Activated CD4-positive, alpha-beta memory T cell treated with anti-CD3 and anti-CD28 coated beads for 36 hours (primary cell): ENCODE measurements at regions of chr19 and their contacts with region 1.

Region 1: GRCh38 chr19:39052243-39052746 is 19.9 kb upstream of the FBXO27 start:
- DNase-seq: peak; percentile 74
- H3K4me3 Mint-ChIP-seq: no peak overlapping the region
- H3K27ac Mint-ChIP-seq: no peak overlapping the region
- H3K4me1 Mint-ChIP-seq: no peaks in the 10 kb centered on the region
- H3K27me3 Mint-ChIP-seq: no peaks in the 10 kb centered on the region

Region 2: DNA sequence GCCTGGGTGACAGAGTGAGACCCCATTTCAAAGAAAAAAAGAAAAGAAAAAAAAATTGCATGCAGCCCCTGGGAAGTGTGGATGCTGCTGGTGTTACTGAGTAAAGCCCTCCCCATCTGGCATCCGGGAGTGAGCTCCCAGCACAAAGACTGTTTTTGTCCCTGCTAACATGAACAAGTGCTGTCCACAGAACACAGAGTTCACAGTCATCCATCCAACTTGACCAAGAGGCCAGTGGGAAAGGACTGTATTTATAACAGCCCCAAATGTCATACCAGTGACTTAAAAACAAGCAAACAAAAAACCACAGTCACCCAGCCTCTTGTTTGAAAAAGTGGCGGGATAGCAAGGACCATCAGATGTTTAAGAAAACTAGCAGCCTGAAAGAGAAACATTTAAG is 87.6 kb before region 1 on chr19:
- CTCF ChIA-PET with region 1: interaction called, 10 read pairs
- POLR2A ChIA-PET with region 1: interaction called, 6 read pairs
- intact Hi-C with region 1: no loop called
- DNase-seq: no peak
- H3K4me3 Mint-ChIP-seq: no peak overlapping the region
- H3K27ac Mint-ChIP-seq: no peak overlapping the region
- H3K4me1 Mint-ChIP-seq: no peaks in the 10 kb centered on the region
- H3K27me3 Mint-ChIP-seq: peaks cover 3% of the 10 kb centered on the region

Region 3: DNA sequence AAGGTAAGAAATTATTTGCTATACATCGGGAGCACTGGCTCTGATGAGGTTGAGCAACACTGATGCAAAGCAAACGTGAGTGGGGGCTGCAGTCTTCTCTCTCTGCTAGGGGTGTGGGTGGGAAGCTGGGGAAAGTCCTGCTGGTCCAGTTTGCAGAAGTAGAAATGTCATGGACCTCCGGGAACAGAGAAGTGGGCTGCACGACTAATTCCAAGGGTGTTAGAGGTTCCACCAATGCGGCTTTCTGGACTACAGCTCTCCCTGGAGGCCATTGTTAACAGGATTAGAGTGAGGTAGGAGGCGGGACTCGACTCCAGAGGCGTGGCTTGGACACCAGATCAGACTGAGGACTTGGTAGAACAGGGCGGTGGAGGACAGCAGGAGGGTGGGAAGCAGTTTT is 14.2 kb before region 1 on chr19:
- CTCF ChIA-PET with region 1: interaction called, 20 read pairs
- POLR2A ChIA-PET with region 1: no interaction called
- intact Hi-C with region 1: no loop called
- DNase-seq: peak; percentile 27
- H3K4me3 Mint-ChIP-seq: no peak overlapping the region
- H3K27ac Mint-ChIP-seq: no peak overlapping the region
- H3K4me1 Mint-ChIP-seq: no peaks in the 10 kb centered on the region
- H3K27me3 Mint-ChIP-seq: peaks cover 3% of the 10 kb centered on the region

Region 4: GRCh38 chr19:39110263-39110967 is 58.1 kb after region 1 on chr19:
- CTCF ChIA-PET with region 1: interaction called, 17 read pairs
- POLR2A ChIA-PET with region 1: no interaction called
- intact Hi-C with region 1: no loop called
- DNase-seq: peak; percentile 79
- H3K4me3 Mint-ChIP-seq: no peak overlapping the region
- H3K27ac Mint-ChIP-seq: no peak overlapping the region
- H3K4me1 Mint-ChIP-seq: no peaks in the 10 kb centered on the region
- H3K27me3 Mint-ChIP-seq: no peaks in the 10 kb centered on the region